Naive thymus-derived CD4-positive, alpha-beta T cell (primary cell): ENCODE measurements at regions of chr16 and their contacts with region 1.

Region 1: GRCh38 chr16:80591071-80591915 is 50.5 kb downstream of the DYNLRB2 start:
- DNase-seq: peak in 8 of 9 donors; percentile 35 to 83 (median 68)
- ATAC-seq: peak; percentile 92
- H3K4me3 ChIP-seq: peak overlapping the region; percentile 42
- H3K4me3 Mint-ChIP-seq: peak overlapping the region; percentile 45 to 79 (median 64)
- H3K27ac ChIP-seq: no peak overlapping the region
- H3K27ac Mint-ChIP-seq: peak overlapping the region in 8 of 9 donors; percentile 1 to 82 (median 38)
- H3K4me1 ChIP-seq: peaks cover 10 to 19% of the 10 kb centered on the region in 2 donors
- H3K4me1 Mint-ChIP-seq: peaks cover 17 to 50% (median 29%) of the 10 kb centered on the region in 7 donors
- H3K27me3 ChIP-seq: no peaks in the 10 kb centered on the region
- H3K27me3 Mint-ChIP-seq: peaks cover 0 to 35% (median 5%) of the 10 kb centered on the region in 5 donors

Region 2: GRCh38 chr16:80569440-80570105 is 21.7 kb before region 1 on chr16:
- CTCF ChIA-PET with region 1: no interaction called
- POLR2A ChIA-PET with region 1: interaction called, 3 read pairs
- intact Hi-C with region 1: loop called in 1 of 2 experiments (anchors 1 kb)
- DNase-seq: peak in 2 of 9 donors; percentile 24 to 74
- ATAC-seq: peak; percentile 78
- H3K4me3 ChIP-seq: no peak overlapping the region
- H3K4me3 Mint-ChIP-seq: peak overlapping the region in 4 of 10 donors; percentile 2 to 65 (median 12)
- H3K27ac ChIP-seq: no peak overlapping the region
- H3K27ac Mint-ChIP-seq: peak overlapping the region in 5 of 9 donors; percentile 3 to 86 (median 38)
- H3K4me1 ChIP-seq: peaks cover 5 to 19% of the 10 kb centered on the region in 2 donors
- H3K4me1 Mint-ChIP-seq: peaks cover 16 to 51% (median 28%) of the 10 kb centered on the region in 7 donors
- H3K27me3 ChIP-seq: no peaks in the 10 kb centered on the region
- H3K27me3 Mint-ChIP-seq: peaks cover 0 to 9% (median 0%) of the 10 kb centered on the region in 5 donors

Region 3: DNA sequence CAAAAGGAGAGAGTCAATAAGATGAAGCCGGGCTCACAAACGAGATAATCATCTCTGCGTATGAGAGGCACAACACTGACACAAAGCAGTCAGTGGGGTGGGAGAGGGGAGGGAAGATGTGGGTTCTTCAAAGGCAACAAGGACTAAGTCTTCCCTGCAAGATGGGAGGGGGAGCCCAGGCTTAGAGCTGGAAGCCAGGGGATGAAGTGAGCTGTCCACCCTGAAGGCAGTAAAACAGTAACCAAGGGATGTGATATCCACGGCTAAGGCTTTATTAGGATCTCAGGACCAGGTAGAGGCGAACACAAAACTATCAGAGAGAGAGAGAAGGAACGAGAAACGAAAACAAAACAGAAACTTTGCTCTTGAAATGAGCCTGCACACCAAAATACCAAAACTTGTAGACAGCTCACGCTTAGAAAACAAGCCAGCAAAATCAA is 65.4 kb after region 1 on chr16:
- CTCF ChIA-PET with region 1: no interaction called
- POLR2A ChIA-PET with region 1: interaction called, 3 read pairs
- intact Hi-C with region 1: loop called (anchors 1 to 2 kb)
- DNase-seq: peak in 8 of 9 donors; percentile 25 to 60 (median 48)
- ATAC-seq: peak; percentile 85
- H3K4me3 ChIP-seq: peak overlapping the region; percentile 56
- H3K4me3 Mint-ChIP-seq: peak overlapping the region; percentile 71 to 92 (median 87)
- H3K27ac ChIP-seq: peak overlapping the region; percentile 68
- H3K27ac Mint-ChIP-seq: peak overlapping the region; percentile 80 to 97 (median 91)
- H3K4me1 ChIP-seq: peaks cover 6 to 14% of the 10 kb centered on the region in 2 donors
- H3K4me1 Mint-ChIP-seq: peaks cover 18 to 47% (median 28%) of the 10 kb centered on the region in 7 donors
- H3K27me3 ChIP-seq: no peaks in the 10 kb centered on the region
- H3K27me3 Mint-ChIP-seq: no peaks in the 10 kb centered on the region